ENCODE measurements at regions of chr15 and their contacts with region 1.

Region 1: GRCh38 chr15:64596701-64597476 is 136.5 kb downstream of the ZNF609 start:
- DNase-seq: no peak
- ATAC-seq: peak; percentile 79
- H3K4me3 ChIP-seq: peak overlapping the region; percentile 53
- H3K27ac ChIP-seq: peak overlapping the region; percentile 74
- H3K4me1 ChIP-seq: peaks cover 10% of the 10 kb centered on the region
- H3K27me3 ChIP-seq: no peaks in the 10 kb centered on the region
- CTCF ChIP-seq: no peak
- EP300 ChIP-seq: no peak
- POLR2A ChIP-seq: no peak
- RAD21 ChIP-seq: no peak

Region 2: GRCh38 chr15:64523240-64523639 is 73.6 kb before region 1 on chr15:
- CTCF ChIA-PET with region 1: no interaction called
- POLR2A ChIA-PET with region 1: no interaction called
- RAD21 ChIA-PET with region 1: no interaction called
- SMC1A ChIA-PET with region 1: no interaction called
- in situ Hi-C with region 1: no loop called
- intact Hi-C with region 1: no loop called
- DNase-seq: no peak
- ATAC-seq: no peak
- H3K4me3 ChIP-seq: no peak overlapping the region
- H3K27ac ChIP-seq: no peak overlapping the region
- H3K4me1 ChIP-seq: no peaks in the 10 kb centered on the region
- H3K27me3 ChIP-seq: no peaks in the 10 kb centered on the region
- CTCF ChIP-seq: no peak
- EP300 ChIP-seq: no peak
- POLR2A ChIP-seq: no peak
- RAD21 ChIP-seq: no peak

Region 3: DNA sequence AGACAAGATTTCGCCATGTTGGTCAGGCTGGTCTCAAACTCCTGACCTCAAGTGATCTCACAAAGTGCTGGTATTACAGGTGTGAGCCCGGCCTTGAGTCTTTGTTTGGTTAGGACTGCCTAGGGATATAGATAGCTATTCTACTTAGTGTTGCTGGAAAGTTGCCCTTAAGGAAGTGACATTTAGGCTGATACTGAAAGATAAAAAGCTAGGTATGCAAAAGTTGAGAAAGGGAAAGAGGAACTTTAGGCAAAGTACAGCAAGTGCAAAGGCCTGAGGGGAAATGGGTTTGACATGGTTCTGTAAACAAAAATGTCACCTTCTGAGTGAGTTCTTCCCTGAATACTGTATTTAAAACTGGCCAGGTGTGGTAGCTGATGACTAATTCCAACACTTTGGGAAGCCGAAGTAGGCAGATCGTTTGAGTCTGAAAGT is 25.0 kb before region 1 on chr15:
- CTCF ChIA-PET with region 1: interaction called, 3 read pairs
- POLR2A ChIA-PET with region 1: interaction called, 5 read pairs
- RAD21 ChIA-PET with region 1: interaction called, 8 read pairs
- SMC1A ChIA-PET with region 1: interaction called, 11 read pairs
- in situ Hi-C with region 1: no loop called
- intact Hi-C with region 1: no loop called
- DNase-seq: peak; percentile 92
- ATAC-seq: peak; percentile 83
- H3K4me3 ChIP-seq: no peak overlapping the region
- H3K27ac ChIP-seq: peak overlapping the region; percentile 75
- H3K4me1 ChIP-seq: peaks cover 43% of the 10 kb centered on the region
- H3K27me3 ChIP-seq: no peaks in the 10 kb centered on the region
- CTCF ChIP-seq: no peak
- EP300 ChIP-seq: 0 out of 4 replicates have a peak, but pooled peaks of 1 of the 2 experiments have one; percentile 29
- POLR2A ChIP-seq: no peak
- RAD21 ChIP-seq: no peak

Region 4: DNA sequence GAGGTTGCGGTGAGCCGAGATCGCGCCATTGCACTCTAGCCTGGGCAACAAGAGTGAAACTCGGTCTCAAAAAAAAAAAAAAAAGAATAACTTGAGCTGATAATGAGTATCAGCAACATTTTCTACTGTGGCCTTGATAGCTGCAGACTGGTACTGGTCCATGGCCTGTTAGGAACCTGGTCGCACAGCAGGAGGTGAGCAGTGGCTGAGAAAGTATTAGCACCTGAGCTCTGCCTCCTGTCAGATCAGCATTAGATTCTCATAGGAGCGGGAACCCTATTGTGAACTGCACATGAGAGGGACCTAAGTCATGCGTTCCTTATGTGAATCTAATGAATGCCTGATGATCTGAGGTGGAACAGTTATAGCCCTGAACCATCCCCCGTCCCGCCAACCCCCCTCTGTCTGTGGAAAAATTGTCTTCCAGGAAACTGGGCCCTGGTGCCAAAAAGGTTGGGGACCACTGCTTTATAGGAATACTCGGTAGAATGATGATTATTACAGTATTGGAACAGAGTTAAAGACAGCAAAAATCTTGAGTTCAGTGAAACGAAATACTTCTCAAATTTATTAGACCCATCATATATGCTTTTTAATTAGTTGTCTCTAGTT is 10.5 kb before region 1 on chr15:
- CTCF ChIA-PET with region 1: interaction called, 3 read pairs
- POLR2A ChIA-PET with region 1: interaction called, 7 read pairs
- RAD21 ChIA-PET with region 1: interaction called, 3 read pairs
- SMC1A ChIA-PET with region 1: interaction called, 13 read pairs
- in situ Hi-C with region 1: no loop called
- intact Hi-C with region 1: no loop called
- DNase-seq: no peak
- ATAC-seq: no peak
- H3K4me3 ChIP-seq: no peak overlapping the region
- H3K27ac ChIP-seq: no peak overlapping the region
- H3K4me1 ChIP-seq: peaks cover 5% of the 10 kb centered on the region; the same call in 1 of the 2 replicates
- H3K27me3 ChIP-seq: no peaks in the 10 kb centered on the region
- CTCF ChIP-seq: no peak
- EP300 ChIP-seq: no peak
- POLR2A ChIP-seq: no peak
- RAD21 ChIP-seq: no peak

Region 5: DNA sequence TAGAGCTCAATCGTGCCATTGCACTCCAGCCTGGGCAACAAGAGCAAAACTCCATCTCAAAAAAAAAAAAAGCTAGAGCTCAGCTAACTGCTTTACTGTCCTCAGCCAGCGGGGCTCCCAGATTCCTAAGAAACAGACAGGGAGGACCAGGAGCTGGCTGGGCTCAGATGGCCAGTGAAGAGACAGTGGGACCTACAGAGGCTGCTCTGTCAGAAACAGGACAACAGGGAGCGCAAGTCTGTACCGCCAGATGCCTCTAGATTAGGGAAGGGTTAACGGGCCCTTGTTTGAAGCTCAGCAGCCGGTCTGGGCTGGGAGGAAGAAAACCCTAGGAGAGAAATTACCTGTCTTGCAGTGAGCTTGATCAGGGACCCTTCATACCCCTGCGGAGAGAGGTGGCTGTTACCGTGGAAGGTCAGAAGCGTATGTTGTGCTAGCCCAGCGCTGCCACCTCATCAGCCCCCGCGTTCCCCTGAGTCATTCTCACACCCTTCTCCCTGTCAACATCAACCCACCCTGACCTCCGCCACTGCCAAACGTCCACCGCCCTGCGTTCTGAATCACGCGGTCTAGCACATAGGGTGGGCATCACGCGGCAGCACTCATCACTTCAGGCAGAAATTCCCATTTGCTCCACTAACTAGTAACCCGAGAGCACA is 153.2 kb after region 1 on chr15:
- CTCF ChIA-PET with region 1: no interaction called
- POLR2A ChIA-PET with region 1: no interaction called
- RAD21 ChIA-PET with region 1: no interaction called
- SMC1A ChIA-PET with region 1: no interaction called
- in situ Hi-C with region 1: no loop called
- intact Hi-C with region 1: no loop called
- DNase-seq: no peak
- ATAC-seq: no peak
- H3K4me3 ChIP-seq: no peak overlapping the region
- H3K27ac ChIP-seq: no peak overlapping the region
- H3K4me1 ChIP-seq: peaks cover 17% of the 10 kb centered on the region
- H3K27me3 ChIP-seq: no peaks in the 10 kb centered on the region; a peak in 1 of 4 replicates
- CTCF ChIP-seq: no peak
- EP300 ChIP-seq: no peak
- POLR2A ChIP-seq: no peak
- RAD21 ChIP-seq: no peak

Region 6: GRCh38 chr15:64825431-64826294 is 228.8 kb after region 1 on chr15 and contains the start of gene PIF1:
- CTCF ChIA-PET with region 1: no interaction called
- POLR2A ChIA-PET with region 1: no interaction called
- RAD21 ChIA-PET with region 1: no interaction called
- SMC1A ChIA-PET with region 1: no interaction called
- in situ Hi-C with region 1: no loop called
- intact Hi-C with region 1: no loop called
- DNase-seq: peak; percentile 98
- ATAC-seq: peak; percentile 93
- H3K4me3 ChIP-seq: peak within 1 kb of the TSS; percentile 88
- H3K27ac ChIP-seq: peak within 1 kb of the TSS; percentile 85
- H3K4me1 ChIP-seq: peaks cover 14% of the 10 kb centered on the region
- H3K27me3 ChIP-seq: no peaks in the 10 kb centered on the region
- CTCF ChIP-seq: peak in 1 of 3 experiments; percentile 9; a peak in 1 of 6 replicates
- EP300 ChIP-seq: peak in 1 of 2 experiments; percentile 34; a peak in 1 of 4 replicates
- POLR2A ChIP-seq: peak; percentile 88
- RAD21 ChIP-seq: no peak
- polyA plus RNA-seq, gene PIF1: 3.7 to 7.2 TPM

Measured in GM12878 (cell line).